Right cardiac atrium (tissue), 5 donors: ENCODE measurements at regions of chrX and their contacts with region 1.

Region 1: DNA sequence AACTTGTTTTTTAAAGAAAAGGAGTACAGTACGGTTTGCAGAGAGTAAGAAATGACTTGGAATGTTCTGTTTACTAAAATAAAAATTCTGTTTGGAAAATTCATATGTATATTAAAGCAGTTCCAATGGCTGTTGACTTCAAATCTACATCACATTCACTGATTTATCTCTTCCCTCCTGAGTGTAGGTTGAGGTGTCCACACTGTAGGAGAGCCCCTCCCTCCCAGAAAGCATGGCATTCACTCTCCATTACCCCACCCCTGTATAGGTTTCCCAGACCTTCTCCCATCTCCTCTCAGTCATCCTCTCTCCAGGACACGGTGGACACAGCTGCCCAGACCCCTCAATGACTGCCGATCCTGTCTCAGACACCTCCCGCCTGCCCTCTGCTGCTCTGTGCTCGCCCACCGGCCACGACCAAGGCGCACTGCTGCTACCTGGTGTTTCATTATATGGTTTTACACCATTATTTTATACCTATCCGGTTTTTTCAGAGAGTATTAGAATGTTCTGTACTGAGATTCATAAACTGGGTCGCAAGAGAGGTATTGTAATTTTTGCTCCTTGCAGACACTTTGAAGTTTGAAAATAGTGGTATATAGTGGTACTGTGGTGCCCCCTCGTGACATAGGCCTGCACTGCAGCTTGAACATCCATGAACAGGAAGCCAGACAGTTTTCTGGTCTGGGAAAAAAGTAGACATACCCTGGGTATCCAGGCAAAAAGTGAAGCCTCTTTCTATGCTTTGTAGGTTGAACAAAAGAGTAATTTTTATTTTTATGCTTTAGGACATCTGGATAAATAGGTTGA is 38.8 kb upstream of the BEX4 start:
- DNase-seq: peak; percentile 40 to 79 (median 67)
- ATAC-seq: peak in 1 of 2 donors; percentile 37
- H3K4me3 ChIP-seq: no peak overlapping the region
- H3K27ac ChIP-seq: no peak overlapping the region
- H3K4me1 ChIP-seq: no peaks in the 10 kb centered on the region
- H3K27me3 ChIP-seq: no peaks in the 10 kb centered on the region

Region 2: GRCh38 chrX:102950908-102951866 is 225.0 kb before region 1 on chrX:
- intact Hi-C with region 1: loop called in 2 of 4 experiments (anchors 5 to 10 kb)
- DNase-seq: peak; percentile 25 to 64 (median 52)
- ATAC-seq: peak in 1 of 2 donors; percentile 74
- H3K4me3 ChIP-seq: no peak overlapping the region
- H3K27ac ChIP-seq: no peak overlapping the region
- H3K4me1 ChIP-seq: no peaks in the 10 kb centered on the region
- H3K27me3 ChIP-seq: no peaks in the 10 kb centered on the region

Region 3: GRCh38 chrX:103607364-103608305 is 431.5 kb after region 1 on chrX and contains the start of gene TCEAL3:
- intact Hi-C with region 1: no loop called
- DNase-seq: peak; percentile 58 to 87 (median 86)
- ATAC-seq: peak; percentile 95 to 96
- H3K4me3 ChIP-seq: peak within 1 kb of the TSS; percentile 96
- H3K27ac ChIP-seq: peak within 1 kb of the TSS; percentile 99
- H3K4me1 ChIP-seq: peaks cover 2% of the 10 kb centered on the region
- H3K27me3 ChIP-seq: no peaks in the 10 kb centered on the region
- total RNA-seq, gene TCEAL3: 35.4 to 42.8 (median 42.3) TPM